Gastrocnemius medialis (tissue), 4 donors: ENCODE measurements at regions of chr1 and their contacts with region 1.

Region 1: GRCh38 chr1:6794164-6794563 is 8.9 kb downstream of the CAMTA1 start:
- DNase-seq: no peak
- ATAC-seq: peak in 1 of 2 donors; percentile 30
- H3K4me3 ChIP-seq: no peak overlapping the region
- H3K27ac ChIP-seq: no peak overlapping the region
- H3K4me1 ChIP-seq: peaks cover 14 to 43% of the 10 kb centered on the region in 2 donors
- H3K27me3 ChIP-seq: no peaks in the 10 kb centered on the region
- CTCF ChIP-seq: peak in 4 of 5 experiments; percentile 29 to 45 (median 39)
- POLR2A ChIP-seq: no peak

Region 2: GRCh38 chr1:6711174-6711573 is 83.0 kb before region 1 on chr1:
- in situ Hi-C with region 1: no loop called
- intact Hi-C with region 1: no loop called
- DNase-seq: no peak
- ATAC-seq: no peak
- H3K4me3 ChIP-seq: no peak overlapping the region
- H3K27ac ChIP-seq: no peak overlapping the region
- H3K4me1 ChIP-seq: no peaks in the 10 kb centered on the region
- H3K27me3 ChIP-seq: no peaks in the 10 kb centered on the region
- CTCF ChIP-seq: no peak
- POLR2A ChIP-seq: no peak

Region 3: GRCh38 chr1:6832531-6833188 is 38.5 kb after region 1 on chr1:
- in situ Hi-C with region 1: no loop called
- intact Hi-C with region 1: loop called (anchors 5 kb)
- DNase-seq: peak in 1 of 2 donors; percentile 26
- ATAC-seq: peak; percentile 79 to 83
- H3K4me3 ChIP-seq: no peak overlapping the region
- H3K27ac ChIP-seq: peak overlapping the region; percentile 16 to 72 (median 51)
- H3K4me1 ChIP-seq: peaks cover 29 to 32% of the 10 kb centered on the region in 2 donors
- H3K27me3 ChIP-seq: no peaks in the 10 kb centered on the region
- CTCF ChIP-seq: no peak
- POLR2A ChIP-seq: no peak

Region 4: DNA sequence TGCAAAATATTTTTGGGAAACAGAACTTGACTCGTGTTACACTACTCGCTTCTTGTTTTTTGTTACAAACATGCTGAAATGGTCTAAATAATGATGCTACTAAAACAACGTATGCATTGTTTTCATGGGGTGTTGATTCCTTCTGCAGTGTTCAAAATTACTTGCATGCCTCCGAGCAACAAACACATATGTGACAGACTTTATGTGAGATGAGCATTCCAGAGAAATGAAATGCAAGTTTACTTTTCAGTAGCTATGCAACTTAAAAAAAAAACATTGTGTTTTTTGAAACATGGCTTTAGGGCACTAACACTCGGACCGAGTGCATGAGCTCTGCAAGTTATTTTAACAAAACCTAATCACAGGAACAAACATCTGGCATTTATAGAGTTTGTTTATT is 75.9 kb after region 1 on chr1:
- in situ Hi-C with region 1: loop called in 1 of 4 experiments (anchors 10 kb)
- intact Hi-C with region 1: no loop called
- DNase-seq: no peak
- ATAC-seq: no peak
- H3K4me3 ChIP-seq: no peak overlapping the region
- H3K27ac ChIP-seq: no peak overlapping the region
- H3K4me1 ChIP-seq: peaks cover 12 to 20% of the 10 kb centered on the region in 2 donors
- H3K27me3 ChIP-seq: no peaks in the 10 kb centered on the region
- CTCF ChIP-seq: no peak
- POLR2A ChIP-seq: no peak

Region 5: GRCh38 chr1:6889875-6890480 is 95.8 kb after region 1 on chr1:
- in situ Hi-C with region 1: loop called in 1 of 4 experiments (anchors 10 kb)
- intact Hi-C with region 1: loop called (anchors 5 kb)
- DNase-seq: peak in 1 of 2 donors; percentile 25
- ATAC-seq: peak; percentile 71 to 73
- H3K4me3 ChIP-seq: no peak overlapping the region
- H3K27ac ChIP-seq: no peak overlapping the region
- H3K4me1 ChIP-seq: no peaks in the 10 kb centered on the region
- H3K27me3 ChIP-seq: no peaks in the 10 kb centered on the region
- CTCF ChIP-seq: peak; percentile 45 to 80 (median 70)
- POLR2A ChIP-seq: no peak

Region 6: DNA sequence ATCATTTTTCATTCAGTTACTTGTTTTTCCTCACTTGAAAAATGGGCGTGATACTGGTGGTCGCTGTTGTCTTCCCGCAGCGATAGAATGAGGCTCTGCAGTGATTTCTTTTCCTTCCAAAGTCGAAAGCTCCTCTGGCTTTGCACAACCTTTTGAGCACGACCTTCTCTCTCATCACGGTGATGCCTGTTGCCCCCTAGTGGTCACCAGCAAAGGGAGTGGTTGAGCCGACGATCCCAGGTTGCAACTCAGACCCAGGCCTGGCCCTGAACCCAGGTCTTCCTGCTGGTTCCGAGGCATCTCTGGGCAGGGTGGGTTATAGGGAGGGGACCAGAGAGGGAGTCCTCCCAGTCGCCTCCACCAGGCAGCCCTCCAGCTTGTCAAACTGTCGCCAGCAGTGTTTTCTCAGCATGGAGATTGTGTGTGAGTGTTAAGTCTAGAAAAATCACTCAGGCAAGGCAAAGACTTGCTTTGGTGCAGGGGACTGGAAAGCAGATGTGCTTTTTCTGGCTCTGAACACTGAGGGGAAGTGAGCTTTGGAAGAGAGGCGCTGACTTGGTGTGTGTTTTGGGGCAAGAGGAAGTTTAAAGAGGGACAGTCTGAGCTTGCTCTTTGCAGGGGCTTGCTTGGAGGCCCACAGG is 276.3 kb after region 1 on chr1:
- in situ Hi-C with region 1: loop called in 1 of 4 experiments (anchors 10 kb)
- intact Hi-C with region 1: loop called (anchors 1 kb)
- DNase-seq: peak; percentile 47 to 48
- ATAC-seq: peak; percentile 77 to 92
- H3K4me3 ChIP-seq: peak overlapping the region; percentile 35 to 54 (median 42)
- H3K27ac ChIP-seq: no peak overlapping the region
- H3K4me1 ChIP-seq: peaks cover 0 to 5% of the 10 kb centered on the region in 2 donors
- H3K27me3 ChIP-seq: no peaks in the 10 kb centered on the region
- CTCF ChIP-seq: peak; percentile 67 to 88 (median 77)
- POLR2A ChIP-seq: no peak

Region 7: DNA sequence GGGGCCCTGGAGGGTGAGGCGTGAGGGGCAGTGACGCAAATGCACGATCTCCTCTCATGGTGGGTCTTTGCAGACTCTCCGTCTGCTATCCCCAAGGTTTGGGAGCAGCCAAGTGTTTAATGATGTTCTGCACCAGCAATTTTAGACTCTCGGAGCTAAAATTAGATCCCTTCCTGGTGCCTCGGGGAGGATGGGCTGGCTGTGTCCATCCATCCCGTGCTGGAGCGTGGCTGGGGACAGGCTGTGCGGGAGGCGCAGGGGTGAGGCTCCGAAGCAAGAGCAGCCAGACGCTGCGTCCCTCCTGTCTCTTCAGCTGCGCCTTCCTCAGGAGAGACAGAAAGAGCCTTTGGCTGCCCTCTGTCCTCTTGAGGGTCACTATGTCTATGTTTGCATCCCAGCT is 378.6 kb after region 1 on chr1:
- in situ Hi-C with region 1: no loop called
- intact Hi-C with region 1: no loop called
- DNase-seq: peak; percentile 56 to 87
- ATAC-seq: peak; percentile 71 to 81
- H3K4me3 ChIP-seq: peak overlapping the region in 1 of 4 donors; percentile 26
- H3K27ac ChIP-seq: peak overlapping the region in 2 of 4 donors; percentile 39 to 92
- H3K4me1 ChIP-seq: peaks cover 0 to 32% of the 10 kb centered on the region in 2 donors
- H3K27me3 ChIP-seq: no peaks in the 10 kb centered on the region
- CTCF ChIP-seq: no peak
- POLR2A ChIP-seq: no peak